CD8-positive, alpha-beta T cell (primary cell): ENCODE measurements at regions of chr1 and their contacts with region 1.

Region 1: DNA sequence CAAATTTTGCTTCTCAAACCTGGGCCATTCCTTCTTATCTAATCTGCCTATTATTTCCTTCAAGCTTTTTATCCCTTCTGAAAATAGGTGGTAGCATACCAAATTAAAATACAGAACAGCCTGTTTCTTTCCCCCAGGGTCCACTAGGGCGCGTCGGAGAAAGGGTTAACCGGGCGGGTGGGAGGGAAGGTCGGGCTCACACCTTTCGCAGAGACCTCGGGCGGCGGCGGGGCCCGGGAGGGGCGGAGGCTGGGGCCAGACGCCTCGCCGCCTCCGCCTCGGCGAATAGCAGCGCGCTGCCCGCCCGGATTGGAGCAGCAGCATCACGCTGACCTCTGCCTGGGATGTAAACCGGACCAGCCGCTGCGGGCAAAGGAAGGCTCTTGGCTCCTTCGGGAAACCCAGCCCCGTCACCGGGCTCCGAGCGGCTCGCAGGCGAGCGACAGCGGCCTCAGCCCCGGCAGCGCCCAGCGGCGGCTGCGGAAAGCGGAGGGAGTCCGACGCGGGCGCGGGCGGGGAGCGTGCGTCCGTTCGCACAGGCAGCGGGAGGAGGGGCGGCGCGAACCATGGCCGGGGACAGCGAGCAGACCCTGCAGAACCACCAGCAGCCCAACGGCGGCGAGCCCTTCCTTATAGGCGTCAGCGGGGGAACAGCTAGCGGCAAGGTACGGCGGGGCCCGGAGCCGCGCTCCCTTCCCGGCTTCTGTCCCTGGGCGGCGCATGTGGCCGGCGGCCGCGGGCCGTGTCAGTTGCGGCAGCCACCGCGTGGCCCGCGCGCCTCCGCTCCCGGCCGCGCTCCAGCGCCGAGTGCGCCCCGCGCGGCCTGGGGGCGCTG is at the start of gene UCK2:
- DNase-seq: peak; percentile 4 to 74 (median 47)
- ATAC-seq: peak; percentile 75
- H3K4me3 ChIP-seq: peak within 1 kb of the TSS; percentile 72 to 81
- H3K4me3 Mint-ChIP-seq: peak within 1 kb of the TSS; percentile 89
- H3K27ac ChIP-seq: peak within 1 kb of the TSS; percentile 33 to 43
- H3K27ac Mint-ChIP-seq: peak within 1 kb of the TSS; percentile 81
- H3K4me1 ChIP-seq: peaks cover 11% of the 10 kb centered on the region
- H3K4me1 Mint-ChIP-seq: peaks cover 21% of the 10 kb centered on the region
- H3K27me3 ChIP-seq: no peaks in the 10 kb centered on the region
- H3K27me3 Mint-ChIP-seq: peaks cover 2% of the 10 kb centered on the region
- CTCF ChIP-seq: no peak
- total RNA-seq, gene UCK2: 1.1 to 1.7 TPM

Region 2: GRCh38 chr1:165768513-165769394 is 58.7 kb before region 1 on chr1 and contains the start of gene TMCO1:
- CTCF ChIA-PET with region 1: interaction called, 3 read pairs
- POLR2A ChIA-PET with region 1: interaction called, 15 read pairs
- intact Hi-C with region 1: loop called (anchors 2 kb)
- DNase-seq: peak; percentile 84 to 99 (median 92)
- ATAC-seq: peak; percentile 93
- H3K4me3 ChIP-seq: peak within 1 kb of the TSS; percentile 85 to 93
- H3K4me3 Mint-ChIP-seq: peak within 1 kb of the TSS; percentile 99
- H3K27ac ChIP-seq: peak within 1 kb of the TSS; percentile 71 to 96
- H3K27ac Mint-ChIP-seq: peak within 1 kb of the TSS; percentile 99
- H3K4me1 ChIP-seq: peaks cover 50% of the 10 kb centered on the region
- H3K4me1 Mint-ChIP-seq: peaks cover 65% of the 10 kb centered on the region
- H3K27me3 ChIP-seq: no peaks in the 10 kb centered on the region
- H3K27me3 Mint-ChIP-seq: no peaks in the 10 kb centered on the region
- CTCF ChIP-seq: peak; percentile 24
- total RNA-seq, gene TMCO1: 30.5 to 33.5 TPM

Region 3: DNA sequence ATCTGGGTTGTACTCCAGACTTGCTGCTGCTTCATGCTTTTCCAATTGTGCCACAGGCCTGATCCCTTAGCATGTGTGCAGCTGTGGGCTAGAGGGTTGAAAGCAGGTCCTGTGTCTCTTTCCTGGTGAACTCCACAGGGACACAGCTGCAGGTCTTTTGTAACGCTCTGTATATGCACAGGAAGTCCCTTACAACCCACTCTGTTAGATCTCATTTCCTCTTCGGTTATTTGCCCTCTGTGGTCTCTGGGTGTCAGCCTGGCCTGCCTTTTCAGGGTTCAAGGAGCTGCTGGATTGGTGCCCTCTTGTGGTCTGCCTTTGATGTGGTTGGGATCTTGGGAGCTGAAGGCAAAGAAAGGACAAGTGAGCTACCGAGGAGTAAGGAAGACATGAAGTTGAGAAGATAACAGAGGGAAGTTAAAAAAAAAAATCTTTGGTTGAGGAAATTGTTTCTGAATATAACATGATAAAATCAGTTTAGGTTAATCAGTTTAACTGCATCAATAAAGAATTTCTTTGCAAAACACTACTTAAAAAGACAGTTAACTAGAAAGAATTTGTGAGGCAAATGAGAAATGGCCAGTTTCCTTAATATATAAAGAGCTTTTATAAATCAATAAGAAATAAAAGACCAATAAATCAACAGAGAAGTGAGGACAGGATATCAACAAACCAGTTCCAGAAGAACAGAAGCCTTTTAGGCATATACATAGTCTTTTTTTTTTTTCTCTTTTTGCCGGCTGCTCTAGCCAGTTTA is 44.0 kb after region 1 on chr1:
- CTCF ChIA-PET with region 1: no interaction called
- POLR2A ChIA-PET with region 1: no interaction called
- intact Hi-C with region 1: loop called in 1 of 2 experiments (anchors 5 kb)
- DNase-seq: peak; percentile 28 to 84 (median 44)
- ATAC-seq: peak; percentile 67
- H3K4me3 ChIP-seq: no peak overlapping the region
- H3K4me3 Mint-ChIP-seq: peak overlapping the region; percentile 37
- H3K27ac ChIP-seq: no peak overlapping the region
- H3K27ac Mint-ChIP-seq: no peak overlapping the region
- H3K4me1 ChIP-seq: peaks cover 31% of the 10 kb centered on the region
- H3K4me1 Mint-ChIP-seq: peaks cover 38% of the 10 kb centered on the region
- H3K27me3 ChIP-seq: no peaks in the 10 kb centered on the region
- H3K27me3 Mint-ChIP-seq: peaks cover 4% of the 10 kb centered on the region
- CTCF ChIP-seq: no peak